ENCODE measurements at regions of chr2 and their contacts with region 1.

Region 1: DNA sequence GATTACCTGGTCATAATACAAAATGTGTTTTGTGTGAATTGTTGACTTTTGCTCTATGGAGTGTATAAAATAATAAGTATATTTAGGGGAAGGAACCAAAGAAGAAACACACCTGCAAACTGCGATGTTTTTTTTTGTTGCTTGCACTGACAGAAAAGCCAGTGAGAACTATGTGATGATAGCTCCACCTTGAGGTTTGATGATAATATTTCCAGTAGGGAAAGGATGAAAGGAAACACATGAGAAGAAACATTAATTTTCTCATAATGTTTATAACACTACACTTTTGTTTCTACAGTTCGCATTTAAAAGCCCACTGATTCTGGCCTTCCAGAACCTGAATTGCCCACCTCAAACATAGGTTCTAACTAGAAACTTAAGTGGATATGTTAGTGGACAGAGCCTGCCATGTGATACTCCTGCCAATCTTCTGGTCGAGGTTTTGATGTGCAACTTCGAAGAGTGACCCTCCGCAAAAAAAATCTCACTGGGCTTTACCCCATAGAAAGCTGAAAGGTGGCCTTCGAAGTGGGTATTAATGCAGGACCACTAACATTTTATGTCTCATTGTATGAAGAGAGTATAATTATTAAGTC is 476.4 kb upstream of the SPHKAP start:
- DNase-seq: peak; percentile 68
- H3K4me3 Mint-ChIP-seq: no peak overlapping the region
- H3K27ac Mint-ChIP-seq: no peak overlapping the region
- H3K4me1 Mint-ChIP-seq: no peaks in the 10 kb centered on the region
- H3K27me3 Mint-ChIP-seq: peaks cover 71% of the 10 kb centered on the region
- CTCF ChIP-seq: peak; percentile 78

Region 2: GRCh38 chr2:227471924-227472264 is 1186.0 kb before region 1 on chr2 and contains the start of gene AGFG1:
- CTCF ChIA-PET with region 1: no interaction called
- POLR2A ChIA-PET with region 1: no interaction called
- intact Hi-C with region 1: loop called (anchors 5 kb)
- DNase-seq: peak; percentile 83
- H3K4me3 Mint-ChIP-seq: peak within 1 kb of the TSS; percentile 89
- H3K27ac Mint-ChIP-seq: peak within 1 kb of the TSS; percentile 79
- H3K4me1 Mint-ChIP-seq: peaks cover 25% of the 10 kb centered on the region
- H3K27me3 Mint-ChIP-seq: no peaks in the 10 kb centered on the region
- CTCF ChIP-seq: peak; percentile 98
- total RNA-seq, gene AGFG1: 74.2 and 86.1 TPM in 2 replicates

Region 3: GRCh38 chr2:227890495-227891079 is 767.3 kb before region 1 on chr2:
- CTCF ChIA-PET with region 1: interaction called, 31 read pairs
- POLR2A ChIA-PET with region 1: interaction called, 3 read pairs
- intact Hi-C with region 1: loop called (anchors 1 kb)
- DNase-seq: peak; percentile 77
- H3K4me3 Mint-ChIP-seq: no peak overlapping the region
- H3K27ac Mint-ChIP-seq: no peak overlapping the region
- H3K4me1 Mint-ChIP-seq: peaks cover 13% of the 10 kb centered on the region
- H3K27me3 Mint-ChIP-seq: no peaks in the 10 kb centered on the region
- CTCF ChIP-seq: peak; percentile 40

Region 4: GRCh38 chr2:227939271-227940027 is 718.5 kb before region 1 on chr2:
- CTCF ChIA-PET with region 1: interaction called, 3 read pairs
- POLR2A ChIA-PET with region 1: no interaction called
- intact Hi-C with region 1: loop called (anchors 2 kb)
- DNase-seq: peak; percentile 78
- H3K4me3 Mint-ChIP-seq: no peak overlapping the region
- H3K27ac Mint-ChIP-seq: no peak overlapping the region
- H3K4me1 Mint-ChIP-seq: peaks cover 12% of the 10 kb centered on the region
- H3K27me3 Mint-ChIP-seq: no peaks in the 10 kb centered on the region
- CTCF ChIP-seq: peak; percentile 64

Region 5: GRCh38 chr2:228048838-228049490 is 608.9 kb before region 1 on chr2:
- CTCF ChIA-PET with region 1: interaction called, 43 read pairs
- POLR2A ChIA-PET with region 1: interaction called, 6 read pairs
- intact Hi-C with region 1: loop called (anchors 1 kb)
- DNase-seq: peak; percentile 89
- H3K4me3 Mint-ChIP-seq: no peak overlapping the region
- H3K27ac Mint-ChIP-seq: no peak overlapping the region
- H3K4me1 Mint-ChIP-seq: peaks cover 7% of the 10 kb centered on the region
- H3K27me3 Mint-ChIP-seq: peaks cover 30% of the 10 kb centered on the region
- CTCF ChIP-seq: peak; percentile 47

Region 6: DNA sequence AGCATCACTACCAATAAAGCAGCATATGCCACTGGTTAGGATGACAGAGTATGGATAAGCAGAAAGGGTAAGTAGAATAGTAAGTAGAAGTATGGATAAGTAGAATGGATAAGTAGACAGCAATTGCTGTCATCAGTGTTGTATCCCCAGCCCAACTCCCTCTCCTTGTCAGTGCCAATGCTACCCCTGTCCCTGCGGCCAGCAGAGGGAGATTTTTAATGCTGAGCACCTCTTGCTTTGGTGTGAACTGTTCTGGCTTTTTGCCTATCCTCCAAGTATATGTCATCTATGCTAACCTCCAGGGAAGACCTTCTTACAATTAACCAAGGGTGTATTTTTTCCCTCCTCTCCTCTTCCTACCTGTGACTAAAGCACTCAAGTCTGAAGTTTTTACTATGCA is 339.7 kb before region 1 on chr2:
- CTCF ChIA-PET with region 1: interaction called, 5 read pairs
- POLR2A ChIA-PET with region 1: no interaction called
- intact Hi-C with region 1: loop called (anchors 1 kb)
- DNase-seq: peak; percentile 73
- H3K4me3 Mint-ChIP-seq: no peak overlapping the region
- H3K27ac Mint-ChIP-seq: no peak overlapping the region
- H3K4me1 Mint-ChIP-seq: no peaks in the 10 kb centered on the region
- H3K27me3 Mint-ChIP-seq: peaks cover 24% of the 10 kb centered on the region
- CTCF ChIP-seq: peak; percentile 58

Region 7: DNA sequence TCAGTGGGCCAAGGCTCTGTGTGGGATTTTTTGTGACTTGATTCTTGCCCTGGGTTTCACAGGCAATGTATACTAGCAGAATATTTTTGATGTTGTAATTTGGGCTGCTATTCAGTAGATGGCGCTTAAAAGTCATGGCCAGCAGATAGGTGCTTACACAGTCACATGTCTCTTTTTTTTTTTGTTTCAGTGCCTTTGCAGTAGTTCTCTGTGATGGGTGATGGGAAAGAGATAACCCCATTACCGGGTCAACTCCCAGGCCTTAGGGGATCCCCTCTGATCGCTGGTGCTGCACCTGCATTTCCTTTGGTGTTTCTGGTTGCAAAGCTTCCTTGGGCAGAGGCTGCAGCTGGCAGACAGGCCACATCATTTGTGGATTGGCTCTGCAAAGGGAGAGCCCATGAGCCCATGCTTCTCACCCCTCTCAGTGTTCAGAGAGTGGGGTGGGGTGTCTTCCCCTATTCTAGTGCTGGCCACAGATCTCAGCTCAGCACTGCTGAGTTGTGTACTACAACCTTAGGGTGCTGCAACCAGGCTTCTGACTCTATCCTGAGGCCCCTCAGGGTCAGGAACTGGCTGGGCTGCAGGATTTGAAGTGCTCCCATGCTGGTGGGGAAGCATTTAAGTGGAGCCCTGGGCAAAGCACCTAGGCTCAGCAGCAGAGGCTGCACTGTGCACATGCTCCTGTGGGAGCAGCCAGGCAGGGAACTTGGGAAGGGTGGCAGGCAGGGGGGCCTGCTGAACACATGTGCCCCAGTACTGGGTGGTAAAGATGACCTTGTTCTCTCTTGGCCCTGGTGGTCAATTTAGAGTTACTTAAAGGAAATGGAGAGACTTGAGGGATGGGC is 256.6 kb before region 1 on chr2:
- CTCF ChIA-PET with region 1: interaction called, 3 read pairs
- POLR2A ChIA-PET with region 1: no interaction called
- intact Hi-C with region 1: loop called (anchors 1 kb)
- DNase-seq: peak; percentile 31
- H3K4me3 Mint-ChIP-seq: no peak overlapping the region
- H3K27ac Mint-ChIP-seq: no peak overlapping the region
- H3K4me1 Mint-ChIP-seq: no peaks in the 10 kb centered on the region
- H3K27me3 Mint-ChIP-seq: peaks cover 25% of the 10 kb centered on the region
- CTCF ChIP-seq: peak; percentile 15

Measured in MCF 10A (cell line).